Motor neuron (in vitro differentiated cells): ENCODE measurements at regions of chr7 and their contacts with region 1.

Region 1: DNA sequence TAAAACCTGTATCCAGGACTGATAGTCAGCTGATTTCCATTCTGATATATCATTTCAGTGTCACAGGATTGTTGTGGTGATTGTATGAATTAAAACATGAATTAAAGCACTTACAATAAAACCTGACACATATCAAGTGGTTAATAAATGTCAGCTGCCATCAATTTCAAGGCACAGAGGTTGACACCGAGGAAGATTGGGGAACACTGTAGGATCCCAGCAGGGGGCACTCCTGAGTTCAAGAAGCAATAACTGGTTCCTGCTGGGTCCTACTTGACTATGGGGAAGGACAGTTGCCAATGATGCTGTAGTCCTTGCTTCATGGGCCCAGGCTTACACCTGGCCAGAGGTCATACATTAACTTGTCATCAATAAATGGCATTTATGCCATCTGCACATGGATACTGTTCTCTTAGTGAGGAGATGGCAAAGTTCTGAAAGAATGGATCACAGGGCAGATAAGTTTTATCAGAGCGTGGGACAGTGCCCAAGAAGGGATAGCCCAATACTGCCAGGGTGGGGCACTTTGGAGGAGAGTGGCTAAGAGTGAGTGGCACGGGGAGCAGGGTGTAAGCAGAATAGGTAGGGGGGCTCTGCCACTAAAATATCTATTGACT is 24.1 kb downstream of the FZD1 start:
- ATAC-seq: peak in 3 of 8 experiments; percentile 41 to 71 (median 64)
- H3K4me3 ChIP-seq: no peak overlapping the region
- H3K27ac ChIP-seq: no peak overlapping the region
- H3K4me1 ChIP-seq: peaks cover 0 to 4% of the 10 kb centered on the region in 2 donors

Region 2: DNA sequence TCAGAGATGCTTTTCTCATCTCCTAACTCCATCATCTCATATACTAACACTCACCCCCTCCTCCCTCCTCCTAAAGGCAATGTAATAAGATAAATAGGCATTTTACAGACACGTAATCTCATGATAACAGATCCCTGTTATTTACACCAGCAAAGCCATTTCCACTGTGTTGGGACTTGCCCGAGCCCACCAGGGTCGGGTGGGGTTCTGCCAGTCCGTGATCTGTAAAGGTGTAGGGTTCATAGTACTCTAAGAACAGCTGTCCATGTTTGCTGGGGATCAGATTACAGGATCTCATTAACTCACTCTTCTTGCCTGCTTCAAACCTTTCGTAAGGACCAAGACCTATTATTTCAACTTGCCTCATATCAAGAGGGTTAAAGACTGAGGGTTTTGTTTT is 148.3 kb after region 1 on chr7:
- in situ Hi-C with region 1: no loop called
- ATAC-seq: no peak
- H3K4me3 ChIP-seq: no peak overlapping the region
- H3K27ac ChIP-seq: no peak overlapping the region
- H3K4me1 ChIP-seq: no peaks in the 10 kb centered on the region

Region 3: DNA sequence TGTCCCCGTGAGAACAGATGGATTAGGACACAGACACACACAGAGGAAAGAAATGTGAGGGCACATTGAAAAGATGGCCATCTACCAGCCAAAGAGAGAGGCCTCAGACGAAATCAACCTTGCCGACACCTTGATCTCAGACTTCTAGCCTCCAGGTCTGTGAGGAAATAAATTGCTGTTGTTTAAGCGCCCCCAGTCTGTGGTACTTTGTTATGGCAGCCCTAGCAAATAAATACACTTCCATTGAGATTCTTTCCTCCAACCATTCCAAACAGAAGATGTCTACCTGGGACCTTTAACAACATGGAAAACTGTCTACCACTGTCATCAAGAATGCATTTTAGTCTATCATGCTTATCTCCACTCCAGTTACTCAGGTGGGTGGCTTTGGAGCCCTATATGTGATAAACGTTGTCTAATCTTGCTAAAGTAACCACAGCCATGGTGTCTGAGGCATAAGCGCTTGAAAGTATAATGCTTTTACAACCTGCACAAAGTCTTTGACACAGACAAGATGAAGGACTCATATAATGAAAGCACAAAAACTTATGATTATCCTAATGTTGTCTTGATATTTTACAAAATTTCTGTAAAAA is 347.9 kb after region 1 on chr7:
- in situ Hi-C with region 1: loop called in 1 of 9 experiments (anchors 25 kb)
- ATAC-seq: peak in 3 of 8 experiments; percentile 55 to 63 (median 59)
- H3K4me3 ChIP-seq: no peak overlapping the region
- H3K27ac ChIP-seq: no peak overlapping the region
- H3K4me1 ChIP-seq: peaks cover 8 to 17% of the 10 kb centered on the region in 2 donors

Region 4: DNA sequence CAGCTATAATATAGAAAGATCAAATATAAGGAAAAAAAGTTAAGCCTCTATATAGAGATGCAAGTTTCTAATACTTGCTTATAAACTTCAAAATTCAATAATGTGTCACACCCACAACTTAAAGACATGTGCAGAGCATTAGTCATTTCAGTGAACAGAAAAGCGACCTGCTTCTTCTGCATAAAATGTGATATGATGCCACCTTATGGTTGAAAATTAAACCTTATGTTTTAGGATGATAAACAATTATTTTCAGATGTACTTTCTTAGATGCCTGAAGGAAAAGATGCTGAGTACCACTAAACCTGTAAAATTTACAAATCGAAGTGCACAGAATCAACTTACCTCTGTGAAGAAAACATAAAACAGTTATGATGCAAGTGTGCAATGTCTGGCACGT is 496.1 kb after region 1 on chr7:
- in situ Hi-C with region 1: loop called in 1 of 9 experiments (anchors 25 kb)
- ATAC-seq: peak in 3 of 8 experiments; percentile 69 to 84 (median 83)
- H3K4me3 ChIP-seq: no peak overlapping the region
- H3K27ac ChIP-seq: no peak overlapping the region
- H3K4me1 ChIP-seq: no peaks in the 10 kb centered on the region